ENCODE measurements at regions of chr16 and their contacts with region 1.

Region 1: DNA sequence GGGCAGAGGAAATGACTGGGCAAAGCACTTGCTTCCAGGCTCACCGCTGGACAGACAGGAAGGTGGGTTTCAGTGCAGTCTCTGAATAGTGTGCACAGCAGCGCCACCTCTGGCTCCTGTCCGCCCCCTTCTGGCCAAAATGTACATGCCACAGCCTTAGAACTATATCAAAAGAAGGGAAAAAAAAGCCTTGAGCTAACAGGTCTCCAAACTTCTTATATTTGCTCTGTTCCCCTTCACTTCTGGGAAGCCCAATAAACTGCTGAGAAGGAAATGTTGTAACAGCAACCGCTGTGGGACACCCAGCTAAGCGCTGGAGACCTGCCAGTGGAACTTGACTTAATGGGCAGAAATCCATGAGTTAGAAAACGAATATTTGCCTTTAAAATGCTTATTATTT is 17.5 kb downstream of the COG7 start:
- DNase-seq: peak; percentile 81
- ATAC-seq: peak; percentile 96
- H3K4me3 Mint-ChIP-seq: no peak overlapping the region
- H3K27ac Mint-ChIP-seq: no peak overlapping the region
- H3K4me1 Mint-ChIP-seq: no peaks in the 10 kb centered on the region
- H3K27me3 Mint-ChIP-seq: no peaks in the 10 kb centered on the region

Region 2: DNA sequence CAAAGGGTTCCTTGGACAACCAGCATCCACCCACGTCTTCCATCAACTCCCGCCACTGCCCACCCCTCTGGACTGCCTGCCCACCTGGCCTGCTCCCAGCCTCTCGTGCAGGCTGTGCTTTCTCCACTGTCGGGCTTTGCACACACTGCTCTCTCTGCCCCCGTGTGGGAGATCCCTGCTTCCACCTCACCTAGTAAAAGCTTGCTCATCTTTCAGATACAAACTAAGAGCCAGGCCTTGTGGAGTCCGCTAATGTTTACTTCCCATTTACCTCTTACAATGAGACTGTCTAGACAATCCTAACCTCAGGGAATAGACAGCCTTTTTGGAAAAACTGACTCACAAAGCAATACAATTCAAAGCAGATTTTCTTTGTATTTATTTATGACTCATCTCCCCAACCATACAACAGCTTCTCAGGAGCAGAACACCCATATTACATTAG is 353.8 kb before region 1 on chr16:
- CTCF ChIA-PET with region 1: no interaction called
- POLR2A ChIA-PET with region 1: no interaction called
- intact Hi-C with region 1: loop called in 1 of 2 experiments (anchors 10 kb)
- DNase-seq: no peak
- ATAC-seq: peak; percentile 23
- H3K4me3 Mint-ChIP-seq: no peak overlapping the region
- H3K27ac Mint-ChIP-seq: peak overlapping the region; percentile 7
- H3K4me1 Mint-ChIP-seq: peaks cover 5% of the 10 kb centered on the region
- H3K27me3 Mint-ChIP-seq: no peaks in the 10 kb centered on the region

Region 3: DNA sequence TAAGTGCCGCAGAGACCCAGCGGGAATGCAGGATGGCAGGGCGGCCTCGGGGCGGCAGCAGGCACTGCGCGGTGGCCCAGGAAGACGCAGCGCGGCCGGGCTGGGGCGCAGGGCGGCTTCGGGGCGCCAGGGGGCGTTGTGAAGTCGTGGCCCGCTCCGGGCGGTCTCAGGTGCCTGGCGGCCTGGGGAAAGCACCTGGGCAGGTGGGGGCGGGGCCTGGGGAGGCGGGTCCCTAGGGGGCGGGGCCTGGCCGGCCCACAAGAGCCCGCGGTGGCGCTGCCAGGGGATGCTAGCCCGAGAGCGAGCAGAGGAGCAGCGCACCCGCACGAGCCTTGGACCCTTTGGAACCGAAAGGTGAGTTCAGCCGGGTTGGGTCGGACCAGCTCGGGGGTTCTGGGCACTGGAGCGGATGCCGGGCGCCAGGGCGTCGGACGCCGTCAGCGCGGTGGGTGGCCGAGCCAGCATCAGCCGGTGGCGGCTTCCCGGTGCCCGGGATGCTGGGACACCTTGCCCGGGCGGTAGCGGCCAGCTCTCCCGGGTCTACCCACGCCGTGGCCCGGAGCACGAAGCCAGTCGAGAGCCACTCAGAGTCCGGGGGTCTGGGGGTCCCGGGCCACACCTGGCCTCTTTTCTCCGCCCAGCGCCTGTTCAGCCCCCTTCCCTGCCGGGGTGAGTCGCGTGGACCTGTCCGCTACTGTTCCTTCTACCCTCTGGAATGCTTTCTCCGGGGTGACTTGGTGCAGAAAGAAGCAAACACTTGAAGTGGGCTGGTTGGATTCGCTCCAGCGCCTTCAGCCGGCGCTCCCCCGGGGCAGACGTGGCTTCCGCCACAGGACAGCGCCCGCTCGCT is 252.8 kb before region 1 on chr16 and contains the start of gene SCNN1G:
- CTCF ChIA-PET with region 1: interaction called, 64 read pairs
- POLR2A ChIA-PET with region 1: no interaction called
- intact Hi-C with region 1: loop called (anchors 1 kb)
- DNase-seq: peak; percentile 90
- ATAC-seq: peak; percentile 99
- H3K4me3 Mint-ChIP-seq: peak within 1 kb of the TSS; percentile 45
- H3K27ac Mint-ChIP-seq: no peak within 1 kb of the TSS
- H3K4me1 Mint-ChIP-seq: peaks cover 8% of the 10 kb centered on the region
- H3K27me3 Mint-ChIP-seq: peaks cover 51% of the 10 kb centered on the region
- total RNA-seq, gene SCNN1G: not detected

Region 4: GRCh38 chr16:23296994-23297393 is 138.5 kb before region 1 on chr16:
- CTCF ChIA-PET with region 1: no interaction called
- POLR2A ChIA-PET with region 1: no interaction called
- intact Hi-C with region 1: loop called in 1 of 2 experiments (anchors 2 kb)
- DNase-seq: peak; percentile 53
- ATAC-seq: peak; percentile 61
- H3K4me3 Mint-ChIP-seq: no peak overlapping the region
- H3K27ac Mint-ChIP-seq: no peak overlapping the region
- H3K4me1 Mint-ChIP-seq: peaks cover 2% of the 10 kb centered on the region
- H3K27me3 Mint-ChIP-seq: peaks cover 35% of the 10 kb centered on the region

Region 5: DNA sequence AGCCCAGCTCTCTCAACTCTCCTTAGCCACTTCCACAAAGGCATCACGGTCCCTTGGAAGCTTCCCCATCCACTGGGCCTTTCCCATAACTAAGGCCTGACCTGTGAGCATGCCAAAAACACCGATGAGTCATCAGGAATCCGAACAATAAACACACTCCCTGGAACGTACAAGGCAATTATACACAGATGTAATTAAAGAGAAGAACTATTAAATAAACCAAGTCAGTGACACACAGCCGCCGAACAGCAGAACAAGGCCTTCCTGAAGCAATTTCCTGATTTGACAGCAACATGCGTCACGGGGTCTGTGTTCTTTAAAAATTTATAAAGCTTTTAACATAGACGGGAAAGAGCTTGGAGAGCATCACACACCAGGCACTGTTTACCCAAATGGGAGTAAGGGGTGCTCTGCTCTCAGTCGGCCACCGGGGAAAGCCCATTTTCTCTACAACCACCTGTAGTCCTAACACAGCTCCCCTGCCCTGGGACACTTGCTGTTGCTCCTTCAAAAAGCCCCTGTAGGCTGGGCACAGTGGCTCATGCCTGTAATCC is 11.9 kb before region 1 on chr16:
- CTCF ChIA-PET with region 1: interaction called, 28 read pairs
- POLR2A ChIA-PET with region 1: no interaction called
- intact Hi-C with region 1: no loop called
- DNase-seq: no peak
- ATAC-seq: no peak
- H3K4me3 Mint-ChIP-seq: no peak overlapping the region
- H3K27ac Mint-ChIP-seq: no peak overlapping the region
- H3K4me1 Mint-ChIP-seq: no peaks in the 10 kb centered on the region
- H3K27me3 Mint-ChIP-seq: no peaks in the 10 kb centered on the region

Region 6: GRCh38 chr16:23452572-23453337 is 17.3 kb after region 1 on chr16 and contains the start of gene COG7:
- CTCF ChIA-PET with region 1: interaction called, 54 read pairs
- POLR2A ChIA-PET with region 1: no interaction called
- intact Hi-C with region 1: loop called in 1 of 2 experiments (anchors 1 kb)
- DNase-seq: peak; percentile 92
- ATAC-seq: peak; percentile 94
- H3K4me3 Mint-ChIP-seq: peak within 1 kb of the TSS; percentile 92
- H3K27ac Mint-ChIP-seq: peak within 1 kb of the TSS; percentile 93
- H3K4me1 Mint-ChIP-seq: peaks cover 20% of the 10 kb centered on the region
- H3K27me3 Mint-ChIP-seq: no peaks in the 10 kb centered on the region
- total RNA-seq, gene COG7: 18.1 to 19.9 TPM